Adrenal gland (tissue), 19 donors: ENCODE measurements at regions of chr13 and their contacts with region 1.

Region 1: DNA sequence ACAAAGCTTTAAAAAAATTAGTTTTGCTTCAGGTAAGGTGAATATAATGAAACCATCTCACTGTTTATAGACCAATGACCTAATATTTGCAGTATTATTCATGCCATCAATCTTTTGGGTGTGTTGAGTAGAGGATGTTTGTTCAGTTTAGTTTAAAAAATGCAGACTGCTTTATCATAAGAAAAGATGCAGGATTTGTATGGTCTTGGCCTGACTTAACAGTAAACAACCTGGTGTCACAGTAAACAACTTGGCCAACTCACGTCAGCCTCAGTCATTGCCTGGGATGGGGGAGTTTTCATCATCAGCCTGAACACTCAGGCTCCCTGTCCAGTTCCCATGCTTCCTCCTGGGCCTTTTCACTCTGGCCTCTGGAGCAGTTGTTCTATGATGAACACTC is 55.1 kb downstream of the LMO7 start:
- DNase-seq: no peak
- H3K4me3 ChIP-seq: no peak overlapping the region
- H3K27ac ChIP-seq: no peak overlapping the region
- H3K4me1 ChIP-seq: no peaks in the 10 kb centered on the region
- H3K27me3 ChIP-seq: no peaks in the 10 kb centered on the region
- CTCF ChIP-seq: no peak
- POLR2A ChIP-seq: no peak

Region 2: DNA sequence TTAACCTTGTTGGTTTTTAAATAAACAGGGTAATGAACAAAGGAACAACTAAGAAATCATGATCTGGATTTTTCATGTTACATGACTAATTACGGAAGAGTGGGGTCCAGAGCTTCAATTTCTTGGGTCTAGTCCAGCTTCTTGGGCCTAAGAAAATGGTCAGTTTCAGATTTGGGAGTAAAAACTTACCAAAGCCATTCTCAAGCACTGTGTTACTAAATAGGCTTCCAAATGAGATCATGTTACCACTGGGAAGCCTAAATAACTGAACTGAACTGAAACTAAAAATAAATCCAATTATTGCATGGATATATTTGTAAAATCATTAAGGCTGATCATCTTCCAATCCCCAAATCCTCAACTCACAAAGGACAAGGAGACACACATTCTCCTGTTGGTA is 223.1 kb before region 1 on chr13:
- intact Hi-C with region 1: no loop called
- DNase-seq: no peak
- H3K4me3 ChIP-seq: no peak overlapping the region
- H3K27ac ChIP-seq: peak overlapping the region in 1 of 5 donors; percentile 39
- H3K4me1 ChIP-seq: peaks cover 17 to 47% of the 10 kb centered on the region in 2 donors
- H3K27me3 ChIP-seq: no peaks in the 10 kb centered on the region
- CTCF ChIP-seq: no peak
- POLR2A ChIP-seq: no peak

Region 3: DNA sequence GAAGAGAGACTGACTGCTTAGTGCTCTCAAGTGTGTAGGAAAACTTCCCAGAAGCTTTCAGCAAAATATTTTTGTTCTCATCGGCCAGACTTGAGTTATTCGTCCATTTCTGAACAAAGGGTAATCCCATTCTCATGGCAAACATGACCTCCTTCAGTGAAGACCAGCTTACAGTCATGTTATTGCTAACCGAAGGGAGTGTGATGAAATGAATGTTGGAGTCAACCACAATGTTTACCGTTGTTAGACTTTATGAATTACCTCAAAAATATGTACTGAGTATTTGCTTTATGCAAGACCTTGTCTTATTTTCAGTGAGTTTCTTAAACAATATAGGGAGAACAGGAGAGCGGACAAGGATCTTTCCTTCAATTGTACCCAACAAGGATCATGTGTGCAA is 173.5 kb after region 1 on chr13:
- intact Hi-C with region 1: loop called in 1 of 2 experiments (anchors 5 kb)
- DNase-seq: no peak
- H3K4me3 ChIP-seq: no peak overlapping the region
- H3K27ac ChIP-seq: no peak overlapping the region
- H3K4me1 ChIP-seq: no peaks in the 10 kb centered on the region
- H3K27me3 ChIP-seq: no peaks in the 10 kb centered on the region
- CTCF ChIP-seq: no peak
- POLR2A ChIP-seq: no peak

Region 4: GRCh38 chr13:75876360-75877050 is 185.3 kb after region 1 on chr13:
- intact Hi-C with region 1: loop called in 1 of 2 experiments (anchors 10 kb)
- DNase-seq: peak; percentile 45 to 80 (median 56)
- H3K4me3 ChIP-seq: no peak overlapping the region
- H3K27ac ChIP-seq: no peak overlapping the region
- H3K4me1 ChIP-seq: peaks cover 0 to 4% of the 10 kb centered on the region in 2 donors
- H3K27me3 ChIP-seq: peaks cover 5% of the 10 kb centered on the region
- CTCF ChIP-seq: peak; percentile 72 to 93 (median 84)
- POLR2A ChIP-seq: no peak